Psoas muscle (tissue), 8 donors: ENCODE measurements at regions of chr3 and their contacts with region 1.

Region 1: DNA sequence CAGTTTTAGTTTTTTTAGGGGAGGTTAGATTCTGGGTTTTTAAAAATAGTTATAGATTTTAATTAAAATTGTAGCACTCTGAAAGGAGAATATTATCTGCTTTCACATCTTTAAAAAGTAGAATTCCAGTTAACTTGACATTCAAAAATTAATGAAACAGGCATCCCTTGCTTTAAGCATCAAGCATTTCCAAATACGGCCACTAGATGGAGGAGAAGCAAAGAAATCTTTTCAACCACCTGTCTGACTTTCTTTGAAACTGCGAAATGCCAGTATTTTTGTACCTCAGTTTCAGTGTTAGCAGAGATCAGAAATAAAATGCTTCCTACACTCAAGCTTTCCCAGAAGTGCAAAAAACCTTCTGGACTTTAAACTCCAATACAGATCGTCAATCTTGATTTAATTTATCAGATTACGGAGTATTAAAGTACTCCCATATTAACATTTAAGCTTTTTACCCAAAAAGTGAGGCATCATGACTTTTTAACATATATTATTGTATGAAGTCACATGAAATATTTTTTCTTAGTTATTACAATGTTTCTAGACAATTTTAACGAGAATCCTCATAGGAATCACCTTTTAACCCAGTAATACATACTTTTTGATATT is 153.3 kb downstream of the P3H2 start:
- DNase-seq: no peak
- ATAC-seq: peak in 2 of 4 donors; percentile 53 to 62
- H3K4me3 ChIP-seq: no peak overlapping the region
- H3K27ac ChIP-seq: no peak overlapping the region
- H3K4me1 ChIP-seq: no peaks in the 10 kb centered on the region
- H3K27me3 ChIP-seq: no peaks in the 10 kb centered on the region
- CTCF ChIP-seq: peak; percentile 85

Region 2: GRCh38 chr3:189773041-189773451 is 194.3 kb before region 1 on chr3:
- intact Hi-C with region 1: no loop called
- DNase-seq: no peak
- ATAC-seq: no peak
- H3K4me3 ChIP-seq: no peak overlapping the region
- H3K27ac ChIP-seq: no peak overlapping the region
- H3K4me1 ChIP-seq: peaks cover 29% of the 10 kb centered on the region
- H3K27me3 ChIP-seq: no peaks in the 10 kb centered on the region
- CTCF ChIP-seq: no peak

Region 3: GRCh38 chr3:189927975-189928895 is 39.1 kb before region 1 on chr3:
- intact Hi-C with region 1: no loop called
- DNase-seq: no peak
- ATAC-seq: no peak
- H3K4me3 ChIP-seq: no peak overlapping the region
- H3K27ac ChIP-seq: no peak overlapping the region
- H3K4me1 ChIP-seq: no peaks in the 10 kb centered on the region
- H3K27me3 ChIP-seq: no peaks in the 10 kb centered on the region
- CTCF ChIP-seq: no peak

Region 4: GRCh38 chr3:190120269-190121060 is 153.1 kb after region 1 on chr3 and contains the start of gene P3H2:
- intact Hi-C with region 1: loop called in 1 of 2 experiments (anchors 2 kb)
- DNase-seq: peak; percentile 72 to 82
- ATAC-seq: peak; percentile 92 to 99 (median 98)
- H3K4me3 ChIP-seq: peak within 1 kb of the TSS; percentile 65
- H3K27ac ChIP-seq: no peak within 1 kb of the TSS
- H3K4me1 ChIP-seq: no peaks in the 10 kb centered on the region
- H3K27me3 ChIP-seq: peaks cover 0 to 11% (median 0%) of the 10 kb centered on the region in 3 donors
- CTCF ChIP-seq: peak; percentile 40
- total RNA-seq, gene P3H2: 1.2 to 3.4 (median 1.3) TPM

Region 5: GRCh38 chr3:190205739-190206138 is 238.4 kb after region 1 on chr3:
- intact Hi-C with region 1: loop called (anchors 2 kb)
- DNase-seq: no peak
- ATAC-seq: peak in 1 of 4 donors; percentile 56
- H3K4me3 ChIP-seq: no peak overlapping the region
- H3K27ac ChIP-seq: no peak overlapping the region
- H3K4me1 ChIP-seq: no peaks in the 10 kb centered on the region
- H3K27me3 ChIP-seq: no peaks in the 10 kb centered on the region
- CTCF ChIP-seq: no peak

Region 6: GRCh38 chr3:190321789-190322603 is 354.6 kb after region 1 on chr3 and contains the start of gene CLDN1:
- intact Hi-C with region 1: loop called (anchors 5 kb)
- DNase-seq: peak; percentile 82 to 87
- ATAC-seq: peak; percentile 90 to 99 (median 96)
- H3K4me3 ChIP-seq: peak within 1 kb of the TSS; percentile 73
- H3K27ac ChIP-seq: no peak within 1 kb of the TSS
- H3K4me1 ChIP-seq: no peaks in the 10 kb centered on the region
- H3K27me3 ChIP-seq: no peaks in the 10 kb centered on the region
- CTCF ChIP-seq: peak; percentile 97
- total RNA-seq, gene CLDN1: 0.25 to 0.62 (median 0.39) TPM in 3 of 4 donors, not detected in the other

Region 7: GRCh38 chr3:190701096-190701532 is 733.8 kb after region 1 on chr3:
- intact Hi-C with region 1: loop called in 1 of 2 experiments (anchors 5 kb)
- DNase-seq: no peak
- ATAC-seq: peak; percentile 40 to 73 (median 54)
- H3K4me3 ChIP-seq: no peak overlapping the region
- H3K27ac ChIP-seq: no peak overlapping the region
- H3K4me1 ChIP-seq: peaks cover 10% of the 10 kb centered on the region
- H3K27me3 ChIP-seq: no peaks in the 10 kb centered on the region
- CTCF ChIP-seq: peak; percentile 24